ENCODE measurements at regions of chr13 and their contacts with region 1.

Region 1: GRCh38 chr13:29362849-29363604 is 232.5 kb downstream of the SLC7A1 start:
- H3K4me3 Mint-ChIP-seq: no peak overlapping the region
- H3K27ac Mint-ChIP-seq: no peak overlapping the region
- H3K4me1 Mint-ChIP-seq: no peaks in the 10 kb centered on the region
- H3K27me3 Mint-ChIP-seq: no peaks in the 10 kb centered on the region

Region 2: GRCh38 chr13:28843639-28844038 is 519.4 kb before region 1 on chr13:
- intact Hi-C with region 1: no loop called
- H3K4me3 Mint-ChIP-seq: no peak overlapping the region
- H3K27ac Mint-ChIP-seq: no peak overlapping the region
- H3K4me1 Mint-ChIP-seq: no peaks in the 10 kb centered on the region
- H3K27me3 Mint-ChIP-seq: no peaks in the 10 kb centered on the region

Region 3: DNA sequence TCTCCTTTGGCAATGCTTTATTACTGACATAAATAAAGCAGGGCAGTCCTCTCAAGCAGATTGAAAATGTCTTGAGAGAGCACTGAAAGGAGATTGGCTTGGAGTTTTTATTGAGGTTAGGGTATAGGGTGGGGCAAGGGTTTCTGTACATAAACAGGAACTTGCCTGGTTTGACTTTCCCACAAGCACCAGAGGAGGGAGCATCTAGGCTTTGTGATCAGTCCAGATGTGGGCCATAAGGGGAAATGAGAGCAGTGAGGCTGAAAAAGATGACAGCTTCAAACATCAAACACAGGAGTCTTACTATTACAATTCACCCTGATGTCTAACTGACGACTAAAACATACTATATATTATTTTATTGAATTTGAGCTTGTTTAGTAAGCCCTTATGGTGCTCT is 282.0 kb before region 1 on chr13:
- intact Hi-C with region 1: loop called (anchors 2 kb)
- H3K4me3 Mint-ChIP-seq: no peak overlapping the region
- H3K27ac Mint-ChIP-seq: no peak overlapping the region
- H3K4me1 Mint-ChIP-seq: no peaks in the 10 kb centered on the region
- H3K27me3 Mint-ChIP-seq: no peaks in the 10 kb centered on the region

Measured in dendritic cell treated with granulocyte-macrophage colony-stimulating factor and Interleukin-4, amounts not matched to agents 40 ng/mL and 50 ng/mL, for 4 days (primary cell).